ENCODE measurements at regions of chr11 and their contacts with region 1.

Region 1: GRCh38 chr11:77047007-77047927 is 13.1 kb downstream of the B3GNT6 start:
- DNase-seq: peak; percentile 43 to 97 (median 72)
- ATAC-seq: peak; percentile 86
- H3K4me3 ChIP-seq: peak overlapping the region; percentile 56
- H3K4me3 Mint-ChIP-seq: peak overlapping the region; percentile 60
- H3K27ac ChIP-seq: peak overlapping the region in 1 of 2 donors; percentile 37
- H3K27ac Mint-ChIP-seq: peak overlapping the region; percentile 55
- H3K4me1 ChIP-seq: peaks cover 12% of the 10 kb centered on the region
- H3K4me1 Mint-ChIP-seq: peaks cover 10% of the 10 kb centered on the region
- H3K27me3 ChIP-seq: no peaks in the 10 kb centered on the region
- H3K27me3 Mint-ChIP-seq: peaks cover 15% of the 10 kb centered on the region
- CTCF ChIP-seq: peak; percentile 69

Region 2: DNA sequence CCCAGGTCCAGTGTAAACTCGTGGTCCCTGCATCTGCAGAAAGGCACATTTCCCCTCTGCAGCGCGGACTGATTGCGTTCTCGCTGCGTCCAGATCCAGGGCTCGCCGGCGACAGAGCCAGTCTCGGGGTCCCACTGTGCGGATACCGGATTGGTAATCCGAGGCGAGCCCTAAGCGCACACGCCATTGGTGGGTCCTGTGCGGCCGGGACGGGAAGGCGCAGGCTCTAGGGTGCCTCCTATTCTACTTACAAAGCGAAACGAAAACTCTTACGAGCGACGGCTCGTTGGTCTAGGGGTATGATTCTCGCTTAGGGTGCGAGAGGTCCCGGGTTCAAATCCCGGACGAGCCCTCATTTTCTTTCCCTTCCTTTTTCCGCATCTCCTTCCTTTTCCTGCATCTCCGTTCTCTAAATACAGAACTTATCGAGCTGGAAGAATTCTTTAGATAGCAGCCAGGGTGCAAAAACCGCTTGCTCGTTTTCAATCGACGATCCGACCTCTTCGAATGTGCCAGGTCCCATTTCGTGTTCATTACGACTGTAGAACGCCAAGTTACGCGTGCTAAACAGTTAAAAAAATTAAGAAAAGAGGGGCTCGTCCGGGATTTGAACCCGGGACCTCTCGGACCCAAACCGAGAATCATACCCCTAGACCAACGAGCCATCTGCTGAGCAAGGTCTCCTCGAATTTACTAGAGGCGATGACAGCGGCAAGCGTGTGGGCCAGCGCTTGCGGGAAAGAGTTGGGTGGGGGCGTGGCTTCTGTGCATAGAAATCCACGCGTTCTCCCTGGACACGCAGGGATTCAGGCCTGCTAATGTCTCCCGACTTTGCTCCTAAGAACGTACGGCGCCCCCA is 811.8 kb before region 1 on chr11:
- CTCF ChIA-PET with region 1: no interaction called
- POLR2A ChIA-PET with region 1: no interaction called
- intact Hi-C with region 1: loop called in 1 of 2 experiments (anchors 10 kb)
- DNase-seq: peak; percentile 82 to 96 (median 90)
- ATAC-seq: peak; percentile 77
- H3K4me3 ChIP-seq: peak overlapping the region; percentile 84
- H3K4me3 Mint-ChIP-seq: peak overlapping the region; percentile 100
- H3K27ac ChIP-seq: peak overlapping the region; percentile 10 to 37
- H3K27ac Mint-ChIP-seq: peak overlapping the region; percentile 99
- H3K4me1 ChIP-seq: peaks cover 58% of the 10 kb centered on the region
- H3K4me1 Mint-ChIP-seq: peaks cover 54% of the 10 kb centered on the region
- H3K27me3 ChIP-seq: no peaks in the 10 kb centered on the region
- H3K27me3 Mint-ChIP-seq: peaks cover 18% of the 10 kb centered on the region
- CTCF ChIP-seq: no peak

Region 3: DNA sequence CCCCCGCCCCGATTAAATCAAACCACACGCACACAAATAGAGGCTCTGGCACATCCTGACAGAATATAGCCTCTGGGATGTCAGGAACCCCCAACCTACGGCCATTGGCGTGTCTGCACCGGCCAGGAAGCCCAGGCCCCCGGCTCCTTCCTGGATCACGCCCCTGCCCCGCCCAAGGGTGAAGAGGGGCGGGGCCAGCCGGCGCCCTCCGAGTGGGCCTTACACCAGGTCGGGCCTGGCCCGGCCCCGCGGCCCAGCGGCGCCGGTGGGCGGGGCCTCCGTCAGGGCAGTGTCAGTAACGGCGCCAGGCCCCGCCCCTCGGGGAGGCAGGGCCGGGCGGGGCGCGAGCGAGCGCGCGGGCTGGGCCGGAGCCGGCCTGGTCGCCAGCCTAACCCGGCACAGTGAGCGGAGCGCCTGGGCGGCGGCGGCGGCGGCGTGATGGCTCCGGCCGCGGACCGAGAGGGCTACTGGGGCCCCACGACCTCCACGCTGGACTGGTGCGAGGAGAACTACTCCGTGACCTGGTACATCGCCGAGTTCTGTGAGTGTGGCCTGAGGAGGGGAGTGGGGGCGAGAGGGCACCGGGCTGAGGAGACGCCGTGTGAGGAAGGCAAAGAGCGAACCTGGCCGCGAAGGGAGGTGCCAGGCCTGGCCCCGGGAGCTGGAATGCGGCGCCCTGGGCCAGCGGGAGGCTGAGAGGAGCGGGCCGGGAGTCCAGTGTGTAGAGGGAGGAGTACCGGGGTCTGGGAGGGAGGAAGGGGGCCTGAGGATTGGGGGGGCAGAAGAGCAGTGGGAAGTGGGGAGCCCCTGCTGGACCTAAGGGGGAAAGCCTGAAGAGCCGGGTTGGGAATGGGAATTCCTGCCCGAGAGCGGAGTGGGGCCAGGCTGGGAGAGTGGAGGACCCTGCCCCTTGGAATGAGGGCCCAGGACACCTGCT is 186.5 kb before region 1 on chr11 and contains the start of gene ACER3:
- CTCF ChIA-PET with region 1: no interaction called
- POLR2A ChIA-PET with region 1: no interaction called
- intact Hi-C with region 1: loop called in 1 of 2 experiments (anchors 5 kb)
- DNase-seq: peak; percentile 33 to 93 (median 76)
- ATAC-seq: peak; percentile 93
- H3K4me3 ChIP-seq: peak within 1 kb of the TSS; percentile 86
- H3K4me3 Mint-ChIP-seq: peak within 1 kb of the TSS; percentile 89
- H3K27ac ChIP-seq: peak within 1 kb of the TSS in 1 of 2 donors; percentile 39
- H3K27ac Mint-ChIP-seq: peak within 1 kb of the TSS; percentile 75
- H3K4me1 ChIP-seq: peaks cover 19% of the 10 kb centered on the region
- H3K4me1 Mint-ChIP-seq: peaks cover 28% of the 10 kb centered on the region
- H3K27me3 ChIP-seq: no peaks in the 10 kb centered on the region
- H3K27me3 Mint-ChIP-seq: no peaks in the 10 kb centered on the region
- CTCF ChIP-seq: no peak
- total RNA-seq, gene ACER3: 6.4 to 7.0 TPM

Region 4: DNA sequence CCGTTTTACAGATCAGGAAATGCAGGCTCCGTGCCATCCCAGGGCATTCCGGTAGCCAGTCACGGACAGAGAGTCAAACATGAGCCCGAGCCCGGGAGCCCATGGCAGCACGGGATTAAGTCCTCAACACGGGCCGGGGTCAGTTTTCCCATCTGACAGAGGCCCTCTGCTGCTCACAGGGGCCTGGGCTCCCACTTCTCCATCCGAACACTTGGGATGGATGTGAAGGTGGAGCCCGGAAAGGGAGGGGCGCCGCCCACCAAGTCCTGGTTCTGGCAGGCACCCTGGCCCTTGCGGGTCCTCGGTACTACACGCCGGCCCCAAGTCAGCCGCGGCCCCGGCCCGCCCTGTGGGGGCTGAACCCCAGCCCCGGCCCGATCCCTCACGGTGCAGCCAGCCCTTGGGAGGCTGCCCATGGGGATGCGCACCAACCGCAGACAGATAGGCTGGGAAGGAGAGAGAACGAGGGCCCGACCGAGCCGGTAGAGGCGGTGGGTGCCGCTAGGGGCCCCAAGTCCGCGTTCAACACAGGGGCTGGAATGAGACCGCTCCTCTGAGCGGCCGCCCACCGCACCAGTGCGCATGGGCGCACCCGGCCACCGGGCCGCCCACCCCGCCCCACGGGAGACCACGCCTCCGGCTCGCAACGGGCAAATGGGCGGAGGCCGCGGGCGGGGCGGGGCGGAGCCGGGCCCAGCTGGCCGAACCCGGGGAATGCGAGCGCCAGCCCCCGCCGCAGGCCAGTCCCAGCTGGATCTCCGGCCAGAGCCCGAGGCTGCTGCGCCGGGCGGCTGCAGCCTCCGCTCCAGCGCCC is 19.2 kb after region 1 on chr11 and contains the start of gene CAPN5:
- CTCF ChIA-PET with region 1: interaction called, 14 read pairs
- POLR2A ChIA-PET with region 1: interaction called, 3 read pairs
- intact Hi-C with region 1: loop called (anchors 1 kb)
- DNase-seq: peak; percentile 71 to 94 (median 82)
- ATAC-seq: peak; percentile 90
- H3K4me3 ChIP-seq: peak within 1 kb of the TSS; percentile 69
- H3K4me3 Mint-ChIP-seq: peak within 1 kb of the TSS; percentile 92
- H3K27ac ChIP-seq: peak within 1 kb of the TSS in 1 of 2 donors; percentile 39
- H3K27ac Mint-ChIP-seq: peak within 1 kb of the TSS; percentile 71
- H3K4me1 ChIP-seq: peaks cover 19% of the 10 kb centered on the region
- H3K4me1 Mint-ChIP-seq: peaks cover 16% of the 10 kb centered on the region
- H3K27me3 ChIP-seq: no peaks in the 10 kb centered on the region
- H3K27me3 Mint-ChIP-seq: no peaks in the 10 kb centered on the region
- CTCF ChIP-seq: no peak
- total RNA-seq, gene CAPN5: 5.1 to 6.9 TPM

Region 5: DNA sequence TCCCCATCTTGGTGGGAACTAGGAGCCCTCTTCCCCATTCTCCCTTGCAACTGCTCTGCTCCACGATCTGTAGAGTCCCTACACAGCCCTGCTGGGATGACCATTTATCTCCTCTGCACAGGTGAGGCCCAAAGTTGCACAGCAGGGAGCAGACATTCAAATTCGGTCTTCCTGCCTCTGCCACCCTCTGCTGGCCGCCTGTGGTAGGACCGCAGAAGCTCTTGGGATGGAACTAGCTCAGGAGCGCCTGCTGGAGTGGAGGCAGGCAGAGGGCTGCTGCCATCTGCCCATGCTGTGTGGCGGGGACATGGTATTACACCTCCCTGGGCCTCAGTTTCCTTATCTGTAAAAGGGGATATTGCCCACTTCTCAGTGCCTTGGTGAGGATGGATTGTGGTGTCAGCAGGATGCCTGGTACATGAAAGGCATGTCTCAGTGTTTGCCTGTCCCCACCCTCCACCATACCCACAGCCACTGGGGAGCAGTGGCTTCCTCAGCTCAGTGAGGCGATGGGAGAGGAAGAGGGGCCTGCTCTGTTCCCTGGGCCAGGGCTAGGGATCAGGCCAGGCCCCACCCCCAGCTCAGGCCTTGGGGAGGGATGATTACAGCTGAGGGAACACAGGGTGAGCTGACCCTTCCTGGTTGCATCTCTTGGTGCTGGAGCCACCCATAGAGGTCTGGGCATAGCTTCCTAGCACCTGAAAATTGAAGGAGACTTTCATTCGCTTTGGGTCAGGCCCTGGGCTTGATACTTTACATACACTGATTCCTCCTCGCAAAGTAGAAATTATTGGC is 44.1 kb after region 1 on chr11:
- CTCF ChIA-PET with region 1: interaction called, 78 read pairs
- POLR2A ChIA-PET with region 1: interaction called, 16 read pairs
- intact Hi-C with region 1: loop called (anchors 1 kb)
- DNase-seq: peak; percentile 65 to 86 (median 74)
- ATAC-seq: peak; percentile 99
- H3K4me3 ChIP-seq: no peak overlapping the region
- H3K4me3 Mint-ChIP-seq: no peak overlapping the region
- H3K27ac ChIP-seq: no peak overlapping the region
- H3K27ac Mint-ChIP-seq: no peak overlapping the region
- H3K4me1 ChIP-seq: peaks cover 7% of the 10 kb centered on the region
- H3K4me1 Mint-ChIP-seq: peaks cover 5% of the 10 kb centered on the region
- H3K27me3 ChIP-seq: no peaks in the 10 kb centered on the region
- H3K27me3 Mint-ChIP-seq: no peaks in the 10 kb centered on the region
- CTCF ChIP-seq: peak; percentile 89

Region 6: GRCh38 chr11:77121096-77121640 is 73.9 kb after region 1 on chr11:
- CTCF ChIA-PET with region 1: no interaction called
- POLR2A ChIA-PET with region 1: no interaction called
- intact Hi-C with region 1: no loop called
- DNase-seq: no peak
- ATAC-seq: no peak
- H3K4me3 ChIP-seq: no peak overlapping the region
- H3K4me3 Mint-ChIP-seq: no peak overlapping the region
- H3K27ac ChIP-seq: no peak overlapping the region
- H3K27ac Mint-ChIP-seq: no peak overlapping the region
- H3K4me1 ChIP-seq: no peaks in the 10 kb centered on the region
- H3K4me1 Mint-ChIP-seq: peaks cover under 1% of the 10 kb centered on the region
- H3K27me3 ChIP-seq: no peaks in the 10 kb centered on the region
- H3K27me3 Mint-ChIP-seq: no peaks in the 10 kb centered on the region
- CTCF ChIP-seq: no peak

Region 7: DNA sequence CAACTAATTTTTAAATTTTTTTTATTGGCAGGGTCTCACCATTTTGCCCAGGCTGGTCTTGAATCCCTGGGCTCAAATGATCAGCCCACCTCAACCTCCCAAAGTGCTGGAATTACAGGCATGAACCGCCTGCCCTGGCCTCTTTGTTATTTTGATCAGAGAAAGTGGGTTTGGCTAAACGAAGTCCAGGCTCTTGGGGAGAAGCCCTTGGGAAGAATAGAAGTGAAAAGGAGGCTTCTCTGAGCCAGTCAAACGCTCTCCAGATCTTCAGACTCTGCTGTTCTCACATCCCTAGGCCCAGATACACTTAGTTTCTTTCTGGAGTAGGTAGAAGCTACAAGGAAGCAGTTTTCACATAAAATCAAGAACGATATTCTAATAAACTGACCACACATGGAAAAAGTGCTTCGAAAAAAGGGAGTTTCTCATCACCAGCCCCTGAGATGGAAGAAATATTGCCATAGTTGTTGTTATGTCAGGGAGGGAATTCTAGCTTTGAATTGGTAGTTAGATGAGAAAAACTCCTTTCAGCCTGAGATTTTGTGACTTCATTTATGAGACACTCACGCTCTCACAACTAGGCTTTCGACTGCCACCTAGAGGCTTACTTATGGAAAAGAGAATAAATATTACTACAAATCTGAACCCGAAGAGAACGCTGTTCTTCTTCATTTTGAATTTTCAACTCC is 500.7 kb after region 1 on chr11:
- CTCF ChIA-PET with region 1: no interaction called
- POLR2A ChIA-PET with region 1: interaction called, 3 read pairs
- intact Hi-C with region 1: loop called in 1 of 2 experiments (anchors 10 kb)
- DNase-seq: peak in 9 of 14 experiments; percentile 0 to 73 (median 22)
- ATAC-seq: peak; percentile 43
- H3K4me3 ChIP-seq: no peak overlapping the region
- H3K4me3 Mint-ChIP-seq: no peak overlapping the region
- H3K27ac ChIP-seq: no peak overlapping the region
- H3K27ac Mint-ChIP-seq: no peak overlapping the region
- H3K4me1 ChIP-seq: no peaks in the 10 kb centered on the region
- H3K4me1 Mint-ChIP-seq: peaks cover 6% of the 10 kb centered on the region
- H3K27me3 ChIP-seq: no peaks in the 10 kb centered on the region
- H3K27me3 Mint-ChIP-seq: no peaks in the 10 kb centered on the region
- CTCF ChIP-seq: peak; percentile 72

Measured in CD4-positive, alpha-beta T cell (primary cell).